HepG2 (cell line): ENCODE measurements at regions of chr1 and their contacts with region 1.

Region 1: DNA sequence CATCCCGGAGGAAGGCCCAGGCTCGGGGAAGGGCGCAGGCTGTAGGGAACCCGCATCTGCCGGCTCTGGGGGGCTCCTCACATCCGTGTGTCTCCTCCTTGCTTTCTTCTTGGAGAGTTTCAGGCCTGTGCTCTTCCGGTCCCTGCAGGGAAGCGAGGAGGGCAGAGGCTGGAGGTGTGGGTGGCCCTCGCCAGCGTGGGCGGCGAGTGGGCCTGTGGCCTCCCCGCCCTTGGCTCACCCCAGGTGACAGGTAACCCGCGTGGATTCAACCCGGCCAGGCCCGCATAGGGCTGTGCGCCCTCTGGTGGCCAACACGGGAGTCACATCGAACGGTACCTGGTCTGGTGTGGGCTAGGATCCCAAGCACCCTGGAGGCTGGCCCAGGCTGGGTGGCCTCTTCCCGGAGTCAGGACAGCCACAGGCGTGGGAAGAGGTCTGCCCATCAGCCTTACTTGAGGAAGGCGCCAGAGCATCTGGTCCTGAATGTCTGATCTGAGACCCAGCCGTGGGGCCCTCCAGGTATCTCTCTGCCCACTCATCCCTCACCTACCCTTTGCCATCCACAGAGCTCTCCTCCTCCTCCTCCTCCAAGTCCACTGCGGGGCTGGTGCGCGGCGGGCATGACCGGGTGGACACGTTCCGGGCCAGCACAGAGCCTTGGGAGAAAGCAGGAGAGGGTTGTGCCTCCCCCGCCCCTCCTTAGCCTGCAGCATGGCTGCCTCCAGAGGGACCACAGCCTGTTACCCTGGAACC is 9.6 kb upstream of the TNFRSF25 start:
- DNase-seq: no peak
- ATAC-seq: peak; percentile 88
- H3K4me3 ChIP-seq: peak overlapping the region in 1 of 3 experiments; percentile 34; a peak in 1 of 6 replicates
- H3K27ac ChIP-seq: no peak overlapping the region
- H3K4me1 ChIP-seq: peaks cover 24% of the 10 kb centered on the region
- H3K27me3 ChIP-seq: no peaks in the 10 kb centered on the region
- CTCF ChIP-seq: peak; percentile 94
- EP300 ChIP-seq: no peak
- POLR2A ChIP-seq: no peak
- RAD21 ChIP-seq: peak; percentile 70

Region 2: GRCh38 chr1:6445062-6445763 is 30.3 kb before region 1 on chr1:
- CTCF ChIA-PET with region 1: interaction called, 4 read pairs
- POLR2A ChIA-PET with region 1: interaction called, 3 read pairs
- in situ Hi-C with region 1: no loop called
- intact Hi-C with region 1: loop called (anchors 1 kb)
- DNase-seq: peak; percentile 74
- ATAC-seq: peak; percentile 20
- H3K4me3 ChIP-seq: peak overlapping the region; percentile 50 to 78 (median 60); a peak in 5 of 6 replicates
- H3K27ac ChIP-seq: peak overlapping the region; percentile 62
- H3K4me1 ChIP-seq: peaks cover 42% of the 10 kb centered on the region
- H3K27me3 ChIP-seq: peaks cover 0 to 1% of the 10 kb centered on the region in 2 experiments; a peak in 2 of 5 replicates
- CTCF ChIP-seq: peak; percentile 96
- EP300 ChIP-seq: no peak
- POLR2A ChIP-seq: no peak
- RAD21 ChIP-seq: peak; percentile 62